Cardiac septum (tissue), 1 donor: ENCODE measurements at regions of chr5 and their contacts with region 1.

Region 1: GRCh38 chr5:94433454-94434149 is 184.8 kb downstream of the KIAA0825 start:
- DNase-seq: no peak

Region 2: GRCh38 chr5:94196953-94197352 is 236.6 kb before region 1 on chr5:
- intact Hi-C with region 1: loop called (anchors 5 kb)
- DNase-seq: no peak

Region 3: DNA sequence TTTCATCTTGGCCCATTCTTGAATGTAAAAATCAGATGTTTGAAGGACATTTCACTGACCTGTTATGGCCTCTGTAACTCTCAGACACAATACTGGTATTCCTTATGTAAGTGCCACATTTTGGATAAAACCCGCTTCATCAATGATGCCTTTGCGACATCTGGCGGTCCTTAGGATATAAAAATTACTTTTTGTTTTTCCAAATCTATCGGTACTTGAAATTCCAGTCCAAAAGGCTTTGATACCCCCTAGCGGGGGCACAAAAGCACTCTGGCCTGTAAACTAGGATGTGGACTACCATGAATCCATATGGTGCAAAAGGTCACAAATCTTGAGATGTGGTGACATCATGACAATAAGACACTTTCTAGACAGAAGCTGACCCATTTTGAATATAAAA is 107.0 kb before region 1 on chr5:
- intact Hi-C with region 1: no loop called
- DNase-seq: no peak

Region 4: DNA sequence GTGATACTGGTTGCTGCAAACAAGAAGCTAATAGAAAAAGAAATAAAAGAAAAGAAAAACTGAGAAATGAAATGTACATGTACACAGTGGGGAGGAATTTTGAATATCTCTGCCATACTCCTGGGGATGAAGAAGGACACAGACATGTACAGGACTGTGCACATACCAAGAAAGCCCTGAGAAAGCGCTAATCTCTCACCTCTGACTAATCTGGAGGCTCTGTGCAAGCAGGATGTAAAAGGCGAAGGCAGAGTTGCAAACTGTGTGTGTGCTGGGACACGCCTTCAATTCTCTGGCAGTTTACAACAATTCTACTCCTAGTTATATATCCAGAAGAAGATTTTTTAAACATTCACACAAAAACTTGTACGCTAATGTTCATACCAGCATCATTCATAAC is 26.6 kb before region 1 on chr5:
- intact Hi-C with region 1: no loop called
- DNase-seq: no peak

Region 5: GRCh38 chr5:94693043-94693822 is 259.6 kb after region 1 on chr5:
- intact Hi-C with region 1: no loop called
- DNase-seq: no peak